ENCODE measurements at regions of chrX and their contacts with region 1.

Region 1: DNA sequence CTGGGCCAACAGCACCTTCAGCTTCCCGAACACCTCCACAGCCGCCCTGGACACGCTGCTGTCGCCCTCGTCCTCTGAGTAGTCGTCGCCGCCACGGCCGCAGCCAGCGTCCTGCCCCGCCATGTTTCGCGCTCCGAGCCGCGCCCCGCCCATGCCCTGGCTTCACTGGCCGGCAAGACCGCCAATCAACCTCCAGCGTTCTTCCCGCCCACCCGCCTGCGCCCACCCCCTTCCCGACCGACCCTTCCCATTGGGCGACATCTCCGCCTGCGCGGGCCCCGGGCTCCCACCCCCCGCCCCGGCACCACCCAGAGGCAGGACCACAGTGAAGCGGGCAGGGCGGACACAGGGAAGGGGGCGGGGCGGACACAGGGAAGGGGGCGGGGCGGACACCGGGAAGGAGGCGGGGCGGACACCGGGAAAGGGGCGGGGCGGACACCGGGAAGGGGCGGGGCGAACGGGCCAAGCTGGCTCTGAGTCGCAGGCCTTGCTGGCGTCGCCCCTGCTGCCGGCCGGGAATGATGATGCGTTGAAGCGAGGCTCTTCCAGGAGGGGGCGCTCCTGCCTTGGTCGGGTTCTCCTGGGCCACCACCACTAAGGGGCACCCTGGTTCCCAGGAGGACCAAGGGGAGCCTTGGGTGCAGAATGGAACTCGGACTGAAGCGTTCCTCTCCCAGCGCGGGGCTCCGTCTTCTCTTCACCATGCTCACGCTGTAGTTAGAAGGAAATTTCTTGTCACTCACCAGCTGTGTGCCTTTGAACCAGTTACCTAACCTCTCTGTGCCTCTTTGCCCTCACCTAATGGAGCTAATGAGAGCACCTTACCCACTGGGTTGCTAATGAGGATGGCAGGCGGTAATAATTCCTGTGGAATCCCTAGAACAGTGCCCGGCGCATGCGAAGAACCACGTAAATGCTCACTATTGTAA is at the start of gene HAUS7:
- DNase-seq: peak; percentile 88
- H3K4me3 ChIP-seq: peak within 1 kb of the TSS; percentile 55 to 65
- H3K27ac ChIP-seq: peak within 1 kb of the TSS in 1 of 2 donors; percentile 1
- H3K4me1 ChIP-seq: peaks cover 8% of the 10 kb centered on the region
- H3K27me3 ChIP-seq: no peaks in the 10 kb centered on the region
- CTCF ChIP-seq: peak; percentile 37 to 72 (median 62)
- POLR2A ChIP-seq: no peak
- total RNA-seq, gene HAUS7: 34.0 to 35.2 TPM

Region 2: DNA sequence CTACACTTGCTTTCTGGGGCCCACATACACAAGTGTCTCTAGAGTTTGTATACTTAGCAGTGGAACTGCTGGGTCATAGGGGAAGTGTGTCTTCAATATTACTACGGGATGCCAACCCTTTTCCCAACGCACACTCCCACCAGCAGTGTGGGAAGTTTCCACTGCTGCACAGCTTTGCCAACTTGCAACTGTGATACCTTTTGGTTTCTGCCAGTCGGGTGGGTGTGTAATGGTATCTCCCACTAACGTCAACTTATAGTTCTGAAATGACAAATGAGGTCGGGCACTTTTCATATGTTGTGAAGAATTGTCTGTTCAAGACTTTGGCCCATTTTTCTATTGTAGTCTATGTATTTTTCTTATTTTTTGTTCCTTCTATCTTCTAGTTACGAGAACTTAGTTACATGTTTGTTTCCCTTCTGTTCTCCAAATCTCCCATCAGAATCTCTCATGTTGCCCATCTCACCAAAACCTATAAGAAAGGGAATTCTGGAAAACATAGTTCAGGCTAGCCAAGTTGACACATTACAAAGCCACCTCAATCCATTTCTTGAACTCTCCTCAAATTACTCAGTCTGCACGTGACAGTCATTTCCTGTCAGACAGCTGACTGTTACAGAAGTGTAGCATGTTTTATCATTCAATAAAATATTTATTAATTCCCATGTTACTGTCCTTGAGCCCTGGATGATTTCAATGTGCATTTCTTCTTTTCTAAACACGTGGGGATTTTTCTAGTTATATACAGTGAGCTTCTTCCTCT is 100.2 kb before region 1 on chrX:
- intact Hi-C with region 1: no loop called
- DNase-seq: no peak
- H3K4me3 ChIP-seq: no peak overlapping the region
- H3K27ac ChIP-seq: peak overlapping the region in 1 of 2 donors; percentile 45
- H3K4me1 ChIP-seq: peaks cover 6% of the 10 kb centered on the region
- H3K27me3 ChIP-seq: no peaks in the 10 kb centered on the region
- CTCF ChIP-seq: no peak
- POLR2A ChIP-seq: no peak

Region 3: DNA sequence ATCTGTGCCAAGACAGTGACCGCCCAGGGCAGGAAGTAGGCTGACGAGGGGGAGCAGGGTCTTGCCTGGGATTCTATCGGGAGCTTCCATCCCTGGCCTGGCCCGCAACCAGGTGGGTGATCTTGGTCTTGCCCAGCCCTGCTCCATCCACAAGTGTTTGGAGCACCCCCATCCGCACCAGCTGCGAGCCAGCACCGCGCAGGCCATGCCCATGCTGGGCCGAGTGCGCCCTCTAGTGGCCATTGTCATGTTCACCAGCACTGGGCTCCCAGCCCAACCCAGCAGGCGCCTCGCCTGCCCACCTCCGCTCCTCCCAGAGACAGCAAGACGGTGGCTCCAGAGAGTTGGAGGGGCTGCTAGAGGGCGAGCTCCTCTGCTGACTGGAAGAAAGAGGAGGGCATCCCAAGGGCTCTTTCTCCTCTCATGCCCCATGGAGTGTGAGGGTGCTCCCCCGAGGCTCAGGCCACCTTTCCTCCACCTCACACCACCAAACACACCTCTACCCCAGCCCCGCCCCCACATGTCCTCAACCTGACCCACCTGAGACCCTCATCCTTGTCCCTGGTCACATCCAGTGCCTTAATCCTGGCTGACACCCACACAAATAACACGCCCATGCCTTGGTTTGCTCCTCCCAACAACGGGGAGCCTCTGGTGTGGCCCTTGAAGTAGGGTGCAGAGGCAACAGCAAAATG is 36.9 kb after region 1 on chrX:
- intact Hi-C with region 1: loop called (anchors 5 kb)
- DNase-seq: peak; percentile 83
- H3K4me3 ChIP-seq: no peak overlapping the region
- H3K27ac ChIP-seq: no peak overlapping the region
- H3K4me1 ChIP-seq: no peaks in the 10 kb centered on the region
- H3K27me3 ChIP-seq: no peaks in the 10 kb centered on the region
- CTCF ChIP-seq: peak; percentile 69 to 81 (median 80)
- POLR2A ChIP-seq: no peak

Region 4: DNA sequence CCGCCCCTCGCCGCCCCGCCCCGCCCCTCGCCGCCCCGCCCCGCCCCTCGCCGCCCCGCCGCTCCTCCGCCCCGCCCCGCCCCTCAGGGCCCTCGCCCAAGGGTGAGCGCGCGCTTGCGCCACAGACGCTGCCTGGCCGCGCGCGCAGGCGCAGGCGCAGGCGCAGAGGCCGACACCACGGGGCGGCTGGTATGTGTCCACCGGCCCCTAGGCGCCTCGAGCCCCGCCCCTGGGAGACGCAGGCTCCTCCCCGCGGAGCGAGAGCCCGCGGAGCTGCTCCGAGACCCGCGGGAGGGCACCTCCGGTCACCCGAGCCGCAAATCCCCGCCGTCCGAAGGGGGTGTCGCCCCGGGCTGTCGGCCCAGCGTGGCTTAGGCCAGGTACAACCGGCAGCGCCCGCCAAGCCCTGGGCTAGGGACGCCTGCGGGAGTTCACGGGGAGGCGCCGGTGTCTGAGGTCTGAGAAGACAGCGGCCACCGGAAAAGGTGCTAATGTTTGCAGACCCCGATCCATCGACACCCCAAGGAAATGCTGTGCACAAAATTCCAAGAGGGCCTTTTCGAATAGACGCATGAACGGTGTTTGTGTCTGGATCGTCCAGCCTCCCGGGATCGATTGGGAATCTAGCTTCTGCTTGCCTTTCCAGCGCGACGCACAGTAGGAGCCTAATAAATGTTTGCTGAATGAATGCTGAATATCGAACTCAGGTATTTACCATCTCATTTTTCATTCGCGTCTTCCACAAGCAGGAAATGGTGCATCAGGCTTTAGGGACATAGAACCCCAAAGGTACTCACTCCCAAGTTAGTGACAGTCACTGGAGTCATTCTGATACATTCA is 128.7 kb after region 1 on chrX:
- intact Hi-C with region 1: no loop called
- DNase-seq: peak; percentile 83
- H3K4me3 ChIP-seq: peak overlapping the region; percentile 58 to 71
- H3K27ac ChIP-seq: no peak overlapping the region
- H3K4me1 ChIP-seq: peaks cover 2% of the 10 kb centered on the region
- H3K27me3 ChIP-seq: no peaks in the 10 kb centered on the region
- CTCF ChIP-seq: no peak
- POLR2A ChIP-seq: no peak

Region 5: DNA sequence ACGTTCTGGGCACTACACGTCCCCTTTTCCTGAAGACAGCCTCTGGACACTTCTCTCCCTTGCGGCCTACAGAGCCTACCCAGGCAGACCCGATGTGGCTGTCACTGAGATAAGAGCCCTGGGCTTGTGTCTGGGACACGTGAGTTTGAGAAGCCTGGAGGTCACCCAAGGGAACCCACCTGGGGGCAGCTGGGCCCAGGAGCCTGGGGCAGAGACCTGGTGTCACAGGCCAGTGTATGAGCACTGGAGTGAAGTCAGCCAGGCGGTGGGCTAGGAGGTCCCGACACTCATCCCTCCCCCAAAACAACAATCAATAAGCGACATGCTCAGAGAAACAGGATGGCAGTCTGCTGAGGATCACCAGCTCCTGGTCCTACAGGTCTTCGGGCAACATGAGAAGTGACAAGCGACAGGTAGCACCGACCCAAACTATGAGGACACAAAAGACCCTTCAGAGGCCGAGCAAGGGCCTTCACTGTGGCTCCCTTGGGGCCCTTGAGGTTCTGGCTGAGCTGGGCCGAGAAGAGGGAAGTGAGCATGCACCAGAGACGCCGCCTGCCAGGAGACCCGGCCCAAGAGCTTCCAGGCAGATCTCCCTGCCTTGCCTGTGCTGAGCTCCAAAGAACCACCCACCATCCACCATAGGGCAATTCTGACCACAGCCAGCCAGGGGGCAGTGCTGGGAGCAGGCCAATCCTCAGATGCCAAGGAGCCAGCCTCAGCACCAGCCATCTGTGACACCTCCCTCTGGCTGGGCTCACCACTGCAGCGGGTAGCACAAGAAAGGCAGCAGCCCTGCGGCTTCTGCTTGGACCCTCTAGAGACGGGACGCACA is 165.3 kb after region 1 on chrX:
- intact Hi-C with region 1: no loop called
- DNase-seq: no peak
- H3K4me3 ChIP-seq: no peak overlapping the region
- H3K27ac ChIP-seq: no peak overlapping the region
- H3K4me1 ChIP-seq: no peaks in the 10 kb centered on the region
- H3K27me3 ChIP-seq: no peaks in the 10 kb centered on the region
- CTCF ChIP-seq: no peak
- POLR2A ChIP-seq: no peak